PC-3 (cell line): ENCODE measurements at regions of chr4 and their contacts with region 1.

Region 1: GRCh38 chr4:168440442-168441264 is 39.6 kb downstream of the DDX60L start:
- DNase-seq: peak; percentile 71
- ATAC-seq: peak; percentile 90
- H3K4me3 ChIP-seq: no peak overlapping the region
- H3K27ac ChIP-seq: peak overlapping the region; percentile 49
- H3K4me1 ChIP-seq: peaks cover 19% of the 10 kb centered on the region
- H3K27me3 ChIP-seq: no peaks in the 10 kb centered on the region
- CTCF ChIP-seq: no peak

Region 2: GRCh38 chr4:167730769-167731168 is 709.9 kb before region 1 on chr4:
- CTCF ChIA-PET with region 1: no interaction called
- POLR2A ChIA-PET with region 1: no interaction called
- intact Hi-C with region 1: no loop called
- DNase-seq: no peak
- ATAC-seq: no peak
- H3K4me3 ChIP-seq: no peak overlapping the region
- H3K27ac ChIP-seq: no peak overlapping the region
- H3K4me1 ChIP-seq: no peaks in the 10 kb centered on the region
- H3K27me3 ChIP-seq: no peaks in the 10 kb centered on the region
- CTCF ChIP-seq: no peak

Region 3: GRCh38 chr4:167973513-167973912 is 467.1 kb before region 1 on chr4:
- CTCF ChIA-PET with region 1: no interaction called
- POLR2A ChIA-PET with region 1: no interaction called
- intact Hi-C with region 1: no loop called
- DNase-seq: no peak
- ATAC-seq: no peak
- H3K4me3 ChIP-seq: no peak overlapping the region
- H3K27ac ChIP-seq: no peak overlapping the region
- H3K4me1 ChIP-seq: no peaks in the 10 kb centered on the region
- H3K27me3 ChIP-seq: no peaks in the 10 kb centered on the region
- CTCF ChIP-seq: no peak

Region 4: DNA sequence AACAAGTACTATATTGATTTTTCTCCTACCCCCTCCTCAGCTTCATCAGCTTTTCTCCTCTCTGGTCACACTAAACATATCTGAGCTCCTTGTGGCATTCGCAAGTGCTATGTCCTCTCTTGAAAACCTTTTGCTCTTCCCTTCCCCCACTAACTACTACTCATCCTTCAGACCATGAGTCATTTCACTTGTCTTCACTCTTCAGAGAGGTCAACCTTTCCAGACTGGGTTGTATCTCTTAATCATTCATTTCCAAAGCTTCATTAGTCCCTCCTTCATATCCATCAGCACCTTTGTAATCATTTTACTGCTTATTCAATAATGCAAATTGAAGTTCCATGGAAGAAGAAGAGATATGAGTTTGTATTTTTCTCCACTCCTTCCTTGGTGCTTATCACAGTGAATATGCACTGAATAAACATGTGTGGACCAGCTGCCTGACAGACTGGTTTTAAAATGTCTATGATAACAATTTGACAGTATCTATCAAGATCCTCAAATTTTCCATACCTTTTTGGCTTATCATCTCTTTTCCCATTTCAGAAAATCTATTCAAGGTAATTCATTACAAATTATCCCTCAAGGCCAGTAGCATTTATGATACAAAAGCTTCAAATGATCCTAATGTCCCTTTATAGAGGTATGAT is 11.2 kb after region 1 on chr4:
- CTCF ChIA-PET with region 1: no interaction called
- POLR2A ChIA-PET with region 1: no interaction called
- intact Hi-C with region 1: loop called (anchors 2 kb)
- DNase-seq: peak; percentile 84
- ATAC-seq: peak; percentile 86
- H3K4me3 ChIP-seq: no peak overlapping the region
- H3K27ac ChIP-seq: peak overlapping the region; percentile 63
- H3K4me1 ChIP-seq: peaks cover 24% of the 10 kb centered on the region
- H3K27me3 ChIP-seq: no peaks in the 10 kb centered on the region
- CTCF ChIP-seq: no peak

Region 5: GRCh38 chr4:168496834-168497233 is 56.2 kb after region 1 on chr4 and contains the start of gene PALLD:
- CTCF ChIA-PET with region 1: no interaction called
- POLR2A ChIA-PET with region 1: no interaction called
- intact Hi-C with region 1: no loop called
- DNase-seq: no peak
- ATAC-seq: no peak
- H3K4me3 ChIP-seq: no peak within 1 kb of the TSS
- H3K27ac ChIP-seq: no peak within 1 kb of the TSS
- H3K4me1 ChIP-seq: peaks cover 15% of the 10 kb centered on the region
- H3K27me3 ChIP-seq: no peaks in the 10 kb centered on the region
- CTCF ChIP-seq: no peak
- total RNA-seq, gene PALLD: 26.7 and 33.5 TPM in 2 replicates